T-cell (primary cell): ENCODE measurements at regions of chr12 and their contacts with region 1.

Region 1: GRCh38 chr12:26884765-26885576 is 52.0 kb upstream of the ITPR2 start:
- DNase-seq: peak; percentile 59 to 91 (median 75)
- ATAC-seq: peak; percentile 96 to 97 (median 96)
- H3K4me3 ChIP-seq: peak overlapping the region; percentile 8 to 49
- H3K4me3 Mint-ChIP-seq: peak overlapping the region; percentile 46 to 71 (median 53)
- H3K27ac ChIP-seq: no peak overlapping the region
- H3K27ac Mint-ChIP-seq: no peak overlapping the region
- H3K4me1 ChIP-seq: peaks cover 0 to 6% of the 10 kb centered on the region in 2 experiments
- H3K4me1 Mint-ChIP-seq: peaks cover 6 to 12% (median 7%) of the 10 kb centered on the region in 3 donors
- H3K27me3 ChIP-seq: no peaks in the 10 kb centered on the region
- H3K27me3 Mint-ChIP-seq: peaks cover 0 to 4% of the 10 kb centered on the region in 2 donors

Region 2: GRCh38 chr12:26918309-26919215 is 33.6 kb after region 1 on chr12:
- CTCF ChIA-PET with region 1: interaction called, 4 to 10 read pairs
- POLR2A ChIA-PET with region 1: no interaction called
- DNase-seq: no peak
- ATAC-seq: no peak
- H3K4me3 ChIP-seq: no peak overlapping the region
- H3K4me3 Mint-ChIP-seq: no peak overlapping the region
- H3K27ac ChIP-seq: no peak overlapping the region
- H3K27ac Mint-ChIP-seq: no peak overlapping the region
- H3K4me1 ChIP-seq: no peaks in the 10 kb centered on the region
- H3K4me1 Mint-ChIP-seq: peaks cover 0 to 10% (median 0%) of the 10 kb centered on the region in 3 donors
- H3K27me3 ChIP-seq: no peaks in the 10 kb centered on the region
- H3K27me3 Mint-ChIP-seq: no peaks in the 10 kb centered on the region